AG04449 (cell line): ENCODE measurements at regions of chr14 and their contacts with region 1.

Region 1: DNA sequence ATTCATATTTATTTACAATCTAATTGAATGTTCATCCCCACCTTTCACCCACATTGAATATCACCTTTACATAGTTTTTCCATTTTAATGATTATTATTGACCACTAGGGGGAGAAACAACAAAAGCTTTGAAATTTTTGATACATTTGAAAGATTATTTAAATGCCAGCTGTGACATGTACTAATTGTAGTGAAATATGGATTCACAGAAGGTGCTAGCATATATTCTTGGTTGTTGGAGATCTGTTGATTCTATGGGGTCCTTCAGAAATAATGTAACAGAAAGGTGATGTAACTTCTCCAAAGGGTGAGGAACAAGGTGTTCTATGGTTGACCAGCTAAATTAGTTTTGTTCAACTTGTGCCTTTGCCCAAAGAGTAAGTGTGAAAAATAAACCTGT is 22.4 kb upstream of the GPR33 start:
- DNase-seq: no peak
- H3K4me3 ChIP-seq: no peak overlapping the region
- CTCF ChIP-seq: no peak

Region 2: GRCh38 chr14:31527087-31527486 is 16.9 kb after region 1 on chr14:
- CTCF ChIA-PET with region 1: interaction called, 14 read pairs
- POLR2A ChIA-PET with region 1: no interaction called
- DNase-seq: no peak
- H3K4me3 ChIP-seq: no peak overlapping the region
- CTCF ChIP-seq: no peak